ENCODE measurements at regions of chr1 and their contacts with region 1.

Region 1: GRCh38 chr1:162391790-162392563 is 10.4 kb downstream of the C1orf226 start:
- DNase-seq: peak; percentile 22
- H3K4me3 Mint-ChIP-seq: no peak overlapping the region
- H3K27ac Mint-ChIP-seq: no peak overlapping the region
- H3K4me1 Mint-ChIP-seq: no peaks in the 10 kb centered on the region
- H3K27me3 Mint-ChIP-seq: peaks cover 21% of the 10 kb centered on the region

Region 2: GRCh38 chr1:161772397-161772796 is 619.6 kb before region 1 on chr1:
- CTCF ChIA-PET with region 1: interaction called, 3 read pairs
- POLR2A ChIA-PET with region 1: no interaction called
- intact Hi-C with region 1: loop called (anchors 10 kb)
- DNase-seq: no peak
- H3K4me3 Mint-ChIP-seq: no peak overlapping the region
- H3K27ac Mint-ChIP-seq: no peak overlapping the region
- H3K4me1 Mint-ChIP-seq: peaks cover 22% of the 10 kb centered on the region
- H3K27me3 Mint-ChIP-seq: no peaks in the 10 kb centered on the region

Region 3: GRCh38 chr1:161905269-161905884 is 486.6 kb before region 1 on chr1:
- CTCF ChIA-PET with region 1: no interaction called
- POLR2A ChIA-PET with region 1: no interaction called
- intact Hi-C with region 1: loop called (anchors 10 kb)
- DNase-seq: peak; percentile 45
- H3K4me3 Mint-ChIP-seq: no peak overlapping the region
- H3K27ac Mint-ChIP-seq: no peak overlapping the region
- H3K4me1 Mint-ChIP-seq: peaks cover 19% of the 10 kb centered on the region
- H3K27me3 Mint-ChIP-seq: no peaks in the 10 kb centered on the region

Region 4: GRCh38 chr1:162056043-162056442 is 335.9 kb before region 1 on chr1:
- CTCF ChIA-PET with region 1: interaction called, 27 read pairs
- POLR2A ChIA-PET with region 1: no interaction called
- intact Hi-C with region 1: loop called (anchors 1 kb)
- DNase-seq: peak; percentile 63
- H3K4me3 Mint-ChIP-seq: no peak overlapping the region
- H3K27ac Mint-ChIP-seq: no peak overlapping the region
- H3K4me1 Mint-ChIP-seq: no peaks in the 10 kb centered on the region
- H3K27me3 Mint-ChIP-seq: peaks cover 9% of the 10 kb centered on the region

Region 5: GRCh38 chr1:162357681-162358266 is 34.2 kb before region 1 on chr1:
- CTCF ChIA-PET with region 1: interaction called, 3 read pairs
- POLR2A ChIA-PET with region 1: no interaction called
- intact Hi-C with region 1: loop called (anchors 1 kb)
- DNase-seq: no peak
- H3K4me3 Mint-ChIP-seq: no peak overlapping the region
- H3K27ac Mint-ChIP-seq: no peak overlapping the region
- H3K4me1 Mint-ChIP-seq: no peaks in the 10 kb centered on the region
- H3K27me3 Mint-ChIP-seq: peaks cover 7% of the 10 kb centered on the region

Region 6: GRCh38 chr1:162412002-162412401 is 20.0 kb after region 1 on chr1 and contains the start of gene SH2D1B:
- CTCF ChIA-PET with region 1: no interaction called
- POLR2A ChIA-PET with region 1: no interaction called
- intact Hi-C with region 1: no loop called
- DNase-seq: no peak
- H3K4me3 Mint-ChIP-seq: no peak within 1 kb of the TSS
- H3K27ac Mint-ChIP-seq: no peak within 1 kb of the TSS
- H3K4me1 Mint-ChIP-seq: no peaks in the 10 kb centered on the region
- H3K27me3 Mint-ChIP-seq: peaks cover 21% of the 10 kb centered on the region
- total RNA-seq, gene SH2D1B: not detected

Region 7: DNA sequence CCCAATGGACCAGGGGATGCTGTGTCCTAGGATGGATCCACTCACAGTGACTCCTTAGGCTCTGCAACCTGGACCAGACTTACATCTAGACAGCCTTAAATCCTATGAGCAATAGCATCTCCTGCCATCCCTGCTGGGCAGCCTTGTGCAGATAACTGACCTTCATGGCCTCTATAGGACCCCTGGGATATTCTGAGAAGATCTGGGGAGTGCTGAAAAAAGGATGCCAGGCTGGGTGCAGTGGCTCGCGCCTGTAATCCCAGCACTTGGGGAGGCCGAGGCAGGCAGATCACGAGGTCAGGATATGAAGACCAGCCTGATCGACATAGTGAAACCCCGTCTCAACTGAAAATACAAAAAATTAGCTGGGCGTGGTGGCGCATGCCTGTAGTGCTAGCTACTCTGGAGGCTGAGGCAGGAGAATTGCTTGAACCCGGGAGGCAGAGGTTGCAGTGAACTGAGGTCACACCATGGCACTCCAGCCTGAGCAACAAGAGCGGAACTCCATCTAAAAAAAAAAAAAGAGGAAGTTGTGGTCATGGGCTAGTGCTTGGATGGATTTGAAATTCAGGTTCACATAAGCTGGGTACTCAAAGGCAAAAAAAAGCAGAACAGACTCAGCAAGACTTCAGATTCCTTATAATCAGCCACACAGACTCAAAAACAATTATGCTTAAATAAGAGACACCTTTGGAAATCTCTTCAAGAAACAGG is 30.8 kb after region 1 on chr1:
- CTCF ChIA-PET with region 1: no interaction called
- POLR2A ChIA-PET with region 1: no interaction called
- intact Hi-C with region 1: no loop called
- DNase-seq: no peak
- H3K4me3 Mint-ChIP-seq: no peak overlapping the region
- H3K27ac Mint-ChIP-seq: no peak overlapping the region
- H3K4me1 Mint-ChIP-seq: no peaks in the 10 kb centered on the region
- H3K27me3 Mint-ChIP-seq: peaks cover 12% of the 10 kb centered on the region

Measured in activated CD4-positive, alpha-beta memory T cell treated with anti-CD3 and anti-CD28 coated beads for 36 hours (primary cell).